HepG2 (cell line): ENCODE measurements at regions of chr1 and their contacts with region 1.

Region 1: GRCh38 chr1:40919475-40920011 is 57.4 kb upstream of the CITED4 start:
- DNase-seq: peak; percentile 97
- ATAC-seq: peak; percentile 96
- H3K4me3 ChIP-seq: peak overlapping the region in 1 of 3 experiments; percentile 8; a peak in 2 of 6 replicates
- H3K27ac ChIP-seq: peak overlapping the region; percentile 91
- H3K4me1 ChIP-seq: peaks cover 96% of the 10 kb centered on the region
- H3K27me3 ChIP-seq: no peaks in the 10 kb centered on the region
- CTCF ChIP-seq: peak; percentile 36; the same call in 1 of the 2 replicates
- EP300 ChIP-seq: peak; percentile 96 to 99
- POLR2A ChIP-seq: peak; percentile 51 to 79; a peak in 3 of 4 replicates
- RAD21 ChIP-seq: peak; percentile 63

Region 2: GRCh38 chr1:40802078-40802741 is 117.3 kb before region 1 on chr1:
- CTCF ChIA-PET with region 1: no interaction called
- POLR2A ChIA-PET with region 1: no interaction called
- in situ Hi-C with region 1: no loop called
- intact Hi-C with region 1: no loop called
- DNase-seq: peak; percentile 36
- ATAC-seq: peak; percentile 49
- H3K4me3 ChIP-seq: peak overlapping the region; percentile 31 to 58 (median 33); a peak in 4 of 6 replicates
- H3K27ac ChIP-seq: no peak overlapping the region
- H3K4me1 ChIP-seq: peaks cover 20% of the 10 kb centered on the region
- H3K27me3 ChIP-seq: peaks cover 0 to 35% of the 10 kb centered on the region in 2 experiments; a peak in 4 of 5 replicates
- CTCF ChIP-seq: no peak
- EP300 ChIP-seq: no peak
- POLR2A ChIP-seq: no peak
- RAD21 ChIP-seq: no peak

Region 3: DNA sequence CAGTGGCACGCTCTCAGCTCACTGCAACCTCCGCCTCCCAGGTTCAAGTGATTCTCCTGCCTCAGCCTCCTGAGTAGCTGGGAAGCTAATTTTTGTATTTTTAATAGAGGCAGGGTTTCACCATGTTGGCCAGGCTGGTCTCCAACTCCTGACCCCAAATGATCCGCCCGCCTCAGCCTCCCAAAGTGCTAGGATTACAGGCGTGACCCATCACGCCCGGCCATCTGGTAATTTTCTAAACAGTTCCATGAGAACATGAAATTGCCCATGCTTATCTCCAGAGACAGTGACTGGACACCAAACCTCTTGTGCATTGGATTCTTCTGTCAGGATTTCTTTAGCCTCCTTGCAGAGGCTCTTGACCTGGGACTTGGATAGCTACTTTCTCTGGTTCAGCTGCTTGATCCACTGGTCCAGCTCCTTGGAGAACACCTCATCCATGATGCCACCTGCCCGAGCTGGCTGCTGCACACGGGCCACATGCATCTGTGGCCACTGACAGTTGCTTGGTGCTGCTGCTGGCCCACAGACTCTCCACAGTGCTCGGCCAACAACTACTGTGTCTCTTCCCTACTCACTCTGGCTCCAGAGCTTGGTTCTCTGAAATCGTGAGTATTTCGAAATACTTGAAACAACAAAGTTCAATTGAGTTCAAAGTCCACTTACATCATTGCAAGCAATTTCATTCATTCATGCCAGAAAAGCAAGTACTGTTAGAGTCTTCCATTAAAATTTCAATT is 19.9 kb after region 1 on chr1:
- CTCF ChIA-PET with region 1: no interaction called
- POLR2A ChIA-PET with region 1: interaction called, 6 read pairs
- in situ Hi-C with region 1: no loop called
- intact Hi-C with region 1: loop called (anchors 2 kb)
- DNase-seq: peak; percentile 95
- ATAC-seq: peak; percentile 99
- H3K4me3 ChIP-seq: peak overlapping the region in 2 of 3 experiments; percentile 32 to 52; a peak in 3 of 6 replicates
- H3K27ac ChIP-seq: peak overlapping the region; percentile 76
- H3K4me1 ChIP-seq: peaks cover 57% of the 10 kb centered on the region
- H3K27me3 ChIP-seq: no peaks in the 10 kb centered on the region
- CTCF ChIP-seq: 0 out of 2 replicates have a peak, but pooled peaks have one; percentile 17
- EP300 ChIP-seq: peak; percentile 87 to 90; a peak in 3 of 4 replicates
- POLR2A ChIP-seq: peak; percentile 23 to 54; a peak in 1 of 4 replicates
- RAD21 ChIP-seq: peak; percentile 36; the same call in 1 of the 2 replicates